ENCODE measurements at regions of chr15 and their contacts with region 1.

Region 1: GRCh38 chr15:50765195-50765973 is at the start of gene SPPL2A:
- DNase-seq: peak; percentile 85
- H3K4me3 ChIP-seq: peak within 1 kb of the TSS; percentile 66 to 95 (median 90)
- H3K27ac ChIP-seq: peak within 1 kb of the TSS; percentile 84
- H3K4me1 ChIP-seq: peaks cover 5% of the 10 kb centered on the region
- H3K27me3 ChIP-seq: no peaks in the 10 kb centered on the region
- CTCF ChIP-seq: no peak
- total RNA-seq, gene SPPL2A: 76.8 to 107 TPM

Region 2: DNA sequence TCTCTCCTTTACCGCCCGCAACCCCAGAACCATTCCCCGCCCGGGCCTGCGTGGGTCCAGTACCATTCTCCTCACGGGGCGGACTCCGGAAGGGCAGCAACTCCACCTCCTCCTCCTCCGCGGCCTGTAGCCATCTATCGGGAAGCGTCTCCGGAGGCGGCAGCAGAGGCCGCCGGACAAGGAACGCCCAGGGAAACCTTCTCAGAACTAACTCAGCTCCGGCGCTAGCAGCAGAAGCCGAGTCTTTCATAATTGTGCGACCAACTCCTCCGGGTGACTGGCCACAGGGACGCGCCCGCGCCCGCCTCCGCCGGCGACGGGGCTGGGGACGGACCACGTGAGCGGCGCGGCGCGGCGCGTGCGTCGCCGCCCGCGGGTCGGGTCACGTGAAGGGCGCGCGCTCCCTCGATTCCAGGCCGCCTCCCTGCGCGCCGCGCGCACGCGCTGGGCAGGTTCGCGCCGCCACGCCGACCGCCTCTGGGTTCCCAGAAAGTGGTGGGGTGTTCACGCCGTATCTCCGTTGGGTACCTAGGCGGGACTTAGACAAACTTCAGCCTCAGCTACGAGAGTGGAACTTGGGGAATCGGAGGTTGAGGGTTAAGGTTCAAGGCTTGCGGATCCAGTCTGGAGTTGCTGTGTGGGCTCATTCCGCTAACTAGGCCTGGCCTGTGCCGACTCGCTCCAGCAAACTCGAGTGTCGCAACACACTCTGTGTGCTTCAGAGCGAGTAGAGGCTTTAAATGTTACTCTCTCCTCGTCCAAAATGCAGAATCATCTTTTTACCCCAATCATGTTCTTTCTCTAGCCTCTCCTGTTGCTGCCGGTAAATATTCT is 78.7 kb before region 1 on chr15 and contains the start of gene TRPM7:
- CTCF ChIA-PET with region 1: no interaction called
- dilution Hi-C with region 1: no loop called
- in situ Hi-C with region 1: no loop called
- intact Hi-C with region 1: loop called (anchors 2 kb)
- DNase-seq: peak; percentile 87
- H3K4me3 ChIP-seq: peak within 1 kb of the TSS; percentile 53 to 94 (median 64)
- H3K27ac ChIP-seq: peak within 1 kb of the TSS; percentile 62
- H3K4me1 ChIP-seq: peaks cover 23% of the 10 kb centered on the region
- H3K27me3 ChIP-seq: no peaks in the 10 kb centered on the region
- CTCF ChIP-seq: peak in 1 of 2 donors; percentile 28
- total RNA-seq, gene TRPM7: 35.6 to 64.8 TPM

Region 3: GRCh38 chr15:50744601-50745000 is 20.8 kb before region 1 on chr15:
- CTCF ChIA-PET with region 1: no interaction called
- dilution Hi-C with region 1: no loop called
- in situ Hi-C with region 1: no loop called
- intact Hi-C with region 1: loop called (anchors 2 kb)
- DNase-seq: no peak
- H3K4me3 ChIP-seq: no peak overlapping the region
- H3K27ac ChIP-seq: no peak overlapping the region
- H3K4me1 ChIP-seq: peaks cover 5% of the 10 kb centered on the region
- H3K27me3 ChIP-seq: no peaks in the 10 kb centered on the region
- CTCF ChIP-seq: no peak

Measured in mammary epithelial cell (primary cell).